Activated T-helper 2 cell treated with anti-CD3 and anti-CD28 coated beads, Interferon-gamma antibody, Interleukin-2, Interleukin-4, amounts not matched to agents 10 μg/mL and 5 μg/mL and 100 μg/mL, durations not matched to agents 14 hours and 24 hours and 36 hours (primary cell): ENCODE measurements at regions of chr1 and their contacts with region 1.

Region 1: GRCh38 chr1:89454845-89455521 is 69.6 kb upstream of the LRRC8B start:
- DNase-seq: peak; percentile 47
- H3K4me3 Mint-ChIP-seq: no peak overlapping the region
- H3K27ac Mint-ChIP-seq: no peak overlapping the region
- H3K4me1 Mint-ChIP-seq: peaks cover 20% of the 10 kb centered on the region
- H3K27me3 Mint-ChIP-seq: peaks cover 44% of the 10 kb centered on the region

Region 2: GRCh38 chr1:88935522-88936222 is 519.3 kb before region 1 on chr1:
- intact Hi-C with region 1: loop called (anchors 1 kb)
- DNase-seq: no peak
- H3K4me3 Mint-ChIP-seq: no peak overlapping the region
- H3K27ac Mint-ChIP-seq: no peak overlapping the region
- H3K4me1 Mint-ChIP-seq: peaks cover 1% of the 10 kb centered on the region
- H3K27me3 Mint-ChIP-seq: no peaks in the 10 kb centered on the region

Region 3: GRCh38 chr1:89041119-89041641 is 413.8 kb before region 1 on chr1:
- intact Hi-C with region 1: loop called (anchors 1 kb)
- DNase-seq: no peak
- H3K4me3 Mint-ChIP-seq: peak overlapping the region; percentile 0
- H3K27ac Mint-ChIP-seq: peak overlapping the region; percentile 14
- H3K4me1 Mint-ChIP-seq: peaks cover 34% of the 10 kb centered on the region
- H3K27me3 Mint-ChIP-seq: peaks cover 16% of the 10 kb centered on the region

Region 4: DNA sequence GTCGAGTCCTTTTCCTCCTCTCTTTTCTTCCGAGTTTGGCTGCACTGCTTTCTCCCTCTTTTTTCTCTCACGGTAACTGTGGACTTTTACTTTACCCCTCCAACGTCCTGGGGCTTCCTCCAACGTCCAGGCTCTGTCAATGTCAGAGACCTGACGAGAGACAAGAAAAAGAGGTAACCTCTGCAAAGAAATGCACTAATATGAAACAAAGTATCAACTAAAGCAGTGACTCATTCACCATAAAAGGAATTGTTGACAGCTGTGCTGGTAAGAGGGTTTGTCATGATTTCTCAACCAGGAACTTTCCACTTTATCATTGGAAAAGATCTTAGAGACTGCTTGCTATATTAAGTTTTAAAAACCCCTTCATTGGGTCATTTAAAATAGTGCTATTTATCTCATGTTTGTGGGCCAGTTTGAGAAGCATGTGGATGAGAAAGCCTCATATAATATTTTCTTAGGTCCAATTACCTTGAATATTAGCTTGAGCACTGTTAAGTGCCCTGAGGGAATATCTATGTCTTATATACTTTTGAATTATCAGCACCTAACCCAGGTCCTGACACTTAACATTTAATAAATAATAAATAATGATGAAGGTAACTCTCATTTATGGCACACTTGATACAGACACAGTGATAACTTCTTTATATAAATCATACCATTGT is 328.9 kb before region 1 on chr1 and contains the start of gene GBP2:
- intact Hi-C with region 1: loop called (anchors 2 kb)
- DNase-seq: no peak
- H3K4me3 Mint-ChIP-seq: peak within 1 kb of the TSS; percentile 97
- H3K27ac Mint-ChIP-seq: peak within 1 kb of the TSS; percentile 99
- H3K4me1 Mint-ChIP-seq: peaks cover 61% of the 10 kb centered on the region
- H3K27me3 Mint-ChIP-seq: no peaks in the 10 kb centered on the region
- total RNA-seq, gene GBP2: 71.9 and 74.1 TPM in 2 replicates

Region 5: DNA sequence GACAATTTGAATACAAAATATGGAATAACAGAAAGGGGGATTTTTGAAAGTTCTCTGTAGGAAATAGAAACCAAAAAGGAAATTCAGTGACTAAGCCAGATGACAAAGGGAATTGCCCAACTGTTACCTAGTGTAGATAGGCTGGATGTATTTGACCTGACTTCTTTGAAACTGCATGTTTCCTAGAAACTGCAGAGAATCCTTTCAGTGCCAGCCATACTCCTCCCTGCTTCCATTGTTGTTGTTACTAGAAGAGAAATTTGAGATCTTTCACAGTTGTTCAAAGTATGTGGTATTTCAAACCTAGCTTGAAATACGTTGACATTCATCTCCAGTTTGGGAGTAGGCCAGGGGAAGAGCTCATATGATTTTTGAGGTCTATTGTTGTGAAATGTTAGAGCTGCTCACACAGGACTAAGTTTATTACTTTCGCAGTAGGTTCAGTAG is 180.5 kb before region 1 on chr1:
- intact Hi-C with region 1: loop called (anchors 5 kb)
- DNase-seq: no peak
- H3K4me3 Mint-ChIP-seq: peak overlapping the region; percentile 71
- H3K27ac Mint-ChIP-seq: peak overlapping the region; percentile 93
- H3K4me1 Mint-ChIP-seq: peaks cover 71% of the 10 kb centered on the region
- H3K27me3 Mint-ChIP-seq: no peaks in the 10 kb centered on the region

Region 6: DNA sequence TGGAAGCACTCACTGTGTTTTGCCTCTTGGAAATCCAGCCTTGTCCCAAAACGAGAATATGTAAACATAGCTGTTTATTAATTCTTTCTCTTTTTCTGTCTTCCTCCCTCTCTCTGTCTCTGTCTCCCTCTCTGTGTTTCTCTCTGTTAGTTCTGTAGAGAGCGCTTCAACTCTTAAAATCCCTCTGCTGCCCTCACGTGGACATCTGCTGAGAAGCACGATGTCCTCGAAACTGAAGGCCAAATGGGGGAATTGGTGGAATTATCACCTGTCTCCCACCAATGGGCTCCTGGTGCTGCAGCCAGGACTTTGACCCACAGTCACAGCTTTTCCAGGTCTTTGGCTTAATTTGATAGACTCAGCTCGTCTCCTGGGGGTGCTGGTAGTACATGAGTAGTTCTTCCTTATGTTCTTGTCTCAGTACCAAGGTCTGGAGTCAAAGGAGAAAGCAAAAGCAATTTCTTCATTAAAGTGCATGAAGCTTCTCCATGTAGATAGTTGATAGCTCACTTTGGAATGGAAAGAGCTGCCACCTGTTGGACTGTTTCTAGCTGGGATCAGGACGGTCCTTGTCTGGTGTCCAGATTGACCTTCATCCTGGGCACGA is 96.6 kb before region 1 on chr1:
- intact Hi-C with region 1: loop called (anchors 2 kb)
- DNase-seq: peak; percentile 73
- H3K4me3 Mint-ChIP-seq: no peak overlapping the region
- H3K27ac Mint-ChIP-seq: peak overlapping the region; percentile 7
- H3K4me1 Mint-ChIP-seq: peaks cover 45% of the 10 kb centered on the region
- H3K27me3 Mint-ChIP-seq: peaks cover 12% of the 10 kb centered on the region

Region 7: GRCh38 chr1:89465201-89465600 is 10.2 kb after region 1 on chr1:
- intact Hi-C with region 1: loop called (anchors 1 kb)
- DNase-seq: no peak
- H3K4me3 Mint-ChIP-seq: no peak overlapping the region
- H3K27ac Mint-ChIP-seq: no peak overlapping the region
- H3K4me1 Mint-ChIP-seq: peaks cover 40% of the 10 kb centered on the region
- H3K27me3 Mint-ChIP-seq: peaks cover 64% of the 10 kb centered on the region